GM12878 (cell line): ENCODE measurements at regions of chr6 and their contacts with region 1.

Region 1: GRCh38 chr6:156564127-156564806 is 212.9 kb upstream of the ARID1B start:
- DNase-seq: peak; percentile 46
- ATAC-seq: peak; percentile 100
- H3K4me3 ChIP-seq: no peak overlapping the region
- H3K27ac ChIP-seq: no peak overlapping the region
- H3K4me1 ChIP-seq: no peaks in the 10 kb centered on the region
- H3K27me3 ChIP-seq: no peaks in the 10 kb centered on the region; a peak in 1 of 4 replicates
- CTCF ChIP-seq: peak; percentile 91 to 94 (median 93)
- EP300 ChIP-seq: no peak
- POLR2A ChIP-seq: no peak
- RAD21 ChIP-seq: peak; percentile 97

Region 2: GRCh38 chr6:155319902-155320301 is 1244.4 kb before region 1 on chr6:
- CTCF ChIA-PET with region 1: no interaction called
- POLR2A ChIA-PET with region 1: no interaction called
- RAD21 ChIA-PET with region 1: no interaction called
- SMC1A ChIA-PET with region 1: no interaction called
- in situ Hi-C with region 1: loop called (anchors 10 kb)
- intact Hi-C with region 1: loop called (anchors 5 kb)
- DNase-seq: no peak
- ATAC-seq: no peak
- H3K4me3 ChIP-seq: no peak overlapping the region
- H3K27ac ChIP-seq: no peak overlapping the region
- H3K4me1 ChIP-seq: no peaks in the 10 kb centered on the region; the same call in 1 of the 2 replicates
- H3K27me3 ChIP-seq: no peaks in the 10 kb centered on the region
- CTCF ChIP-seq: no peak
- EP300 ChIP-seq: no peak
- POLR2A ChIP-seq: no peak
- RAD21 ChIP-seq: no peak

Region 3: GRCh38 chr6:156686995-156687788 is 122.9 kb after region 1 on chr6:
- CTCF ChIA-PET with region 1: interaction called, 13 read pairs
- POLR2A ChIA-PET with region 1: no interaction called
- RAD21 ChIA-PET with region 1: interaction called, 4 read pairs
- SMC1A ChIA-PET with region 1: interaction called, 22 read pairs
- in situ Hi-C with region 1: loop called (anchors 5 kb)
- intact Hi-C with region 1: loop called (anchors 1 kb)
- DNase-seq: no peak
- ATAC-seq: peak; percentile 69
- H3K4me3 ChIP-seq: peak overlapping the region; percentile 93
- H3K27ac ChIP-seq: peak overlapping the region; percentile 98
- H3K4me1 ChIP-seq: peaks cover 48% of the 10 kb centered on the region
- H3K27me3 ChIP-seq: no peaks in the 10 kb centered on the region
- CTCF ChIP-seq: no peak
- EP300 ChIP-seq: peak in 1 of 2 experiments; percentile 27; a peak in 1 of 4 replicates
- POLR2A ChIP-seq: peak; percentile 85
- RAD21 ChIP-seq: no peak; the same call in 1 of the 2 replicates

Region 4: DNA sequence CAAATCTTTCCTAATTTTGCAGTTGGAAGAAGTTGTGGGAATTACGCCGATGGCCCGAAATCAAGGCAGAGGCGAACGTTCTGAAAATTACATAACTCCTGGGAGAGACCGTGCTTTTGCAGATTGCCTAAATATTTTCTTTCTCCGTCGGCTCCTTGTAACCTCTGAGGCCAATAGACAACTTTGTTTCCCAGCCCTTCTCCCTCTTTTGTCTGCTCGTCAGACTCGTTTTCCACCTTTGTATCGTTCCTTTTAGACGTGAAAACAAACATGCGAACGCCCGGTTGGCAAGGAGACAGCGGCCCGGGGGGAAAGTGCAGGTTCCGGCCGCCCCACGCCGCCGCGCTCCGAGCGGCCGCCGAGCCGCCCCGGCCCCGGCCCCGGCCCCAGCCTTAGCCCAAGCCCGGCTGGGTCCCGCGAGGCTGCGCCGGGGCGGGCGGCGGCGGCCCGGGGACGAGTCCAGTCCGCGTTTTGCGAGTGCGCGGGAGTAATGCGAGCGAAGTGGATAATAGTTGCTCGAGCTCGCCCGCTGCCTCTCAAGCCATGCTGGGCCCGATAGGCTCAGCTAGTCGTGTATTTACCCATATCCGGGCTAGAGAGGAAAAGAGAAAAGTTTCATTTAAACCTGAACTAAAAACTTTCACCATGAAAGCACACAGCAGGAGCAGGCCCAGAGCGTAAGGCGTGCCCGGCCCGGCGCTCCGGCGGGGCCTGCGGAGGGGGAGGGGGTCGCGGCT is 212.7 kb after region 1 on chr6 and contains the start of gene ARID1B:
- CTCF ChIA-PET with region 1: interaction called, 3 read pairs
- POLR2A ChIA-PET with region 1: no interaction called
- RAD21 ChIA-PET with region 1: no interaction called
- SMC1A ChIA-PET with region 1: interaction called, 3 read pairs
- in situ Hi-C with region 1: no loop called
- intact Hi-C with region 1: loop called (anchors 5 kb)
- DNase-seq: no peak
- ATAC-seq: peak; percentile 59
- H3K4me3 ChIP-seq: peak within 1 kb of the TSS; percentile 92
- H3K27ac ChIP-seq: peak within 1 kb of the TSS; percentile 94
- H3K4me1 ChIP-seq: peaks cover 17% of the 10 kb centered on the region
- H3K27me3 ChIP-seq: no peaks in the 10 kb centered on the region
- CTCF ChIP-seq: no peak
- EP300 ChIP-seq: no peak
- POLR2A ChIP-seq: peak; percentile 76
- RAD21 ChIP-seq: no peak
- polyA plus RNA-seq, gene ARID1B: 37.7 to 73.9 TPM

Region 5: GRCh38 chr6:157029980-157030690 is 465.9 kb after region 1 on chr6:
- CTCF ChIA-PET with region 1: no interaction called
- POLR2A ChIA-PET with region 1: no interaction called
- RAD21 ChIA-PET with region 1: no interaction called
- SMC1A ChIA-PET with region 1: no interaction called
- in situ Hi-C with region 1: no loop called
- intact Hi-C with region 1: no loop called
- DNase-seq: no peak
- ATAC-seq: peak; percentile 61
- H3K4me3 ChIP-seq: no peak overlapping the region
- H3K27ac ChIP-seq: no peak overlapping the region
- H3K4me1 ChIP-seq: peaks cover 7% of the 10 kb centered on the region
- H3K27me3 ChIP-seq: no peaks in the 10 kb centered on the region
- CTCF ChIP-seq: no peak
- EP300 ChIP-seq: no peak
- POLR2A ChIP-seq: no peak
- RAD21 ChIP-seq: no peak

Region 6: DNA sequence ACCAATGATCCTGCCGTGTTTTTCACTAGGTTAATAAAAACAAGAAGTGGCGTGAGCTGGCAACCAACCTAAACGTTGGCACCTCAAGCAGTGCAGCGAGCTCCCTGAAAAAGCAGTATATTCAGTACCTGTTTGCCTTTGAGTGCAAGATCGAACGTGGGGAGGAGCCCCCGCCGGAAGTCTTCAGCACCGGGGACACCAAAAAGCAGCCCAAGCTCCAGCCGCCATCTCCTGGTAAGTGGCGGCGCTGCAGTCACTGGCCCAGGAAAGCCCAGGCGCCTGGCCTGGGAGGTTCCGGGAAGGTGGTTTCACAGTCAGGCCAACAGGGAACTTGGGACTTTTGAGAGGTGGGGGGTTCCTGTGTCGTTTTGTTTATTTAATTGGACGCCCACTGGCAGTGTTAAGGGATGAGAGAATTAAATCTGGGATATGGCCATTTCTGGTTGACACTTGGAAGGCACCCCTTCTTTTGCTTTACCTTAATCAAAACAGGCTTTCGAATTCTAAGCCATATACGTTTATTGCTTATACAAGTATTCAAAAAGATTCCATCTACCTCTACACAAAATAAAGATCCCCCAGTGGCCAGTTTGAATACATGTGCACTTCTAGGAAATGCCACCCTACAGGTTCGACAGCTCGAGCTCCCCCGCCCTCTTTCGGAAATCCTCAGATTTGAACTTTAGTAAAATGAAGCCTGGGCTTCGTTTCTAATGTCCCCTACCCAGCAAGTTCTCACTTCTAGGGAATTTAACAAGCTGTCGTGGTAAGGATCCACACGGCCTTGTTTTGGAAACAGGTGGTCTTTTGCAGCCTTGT is 620.1 kb after region 1 on chr6:
- CTCF ChIA-PET with region 1: no interaction called
- POLR2A ChIA-PET with region 1: no interaction called
- RAD21 ChIA-PET with region 1: no interaction called
- SMC1A ChIA-PET with region 1: no interaction called
- in situ Hi-C with region 1: no loop called
- intact Hi-C with region 1: loop called (anchors 5 kb)
- DNase-seq: no peak
- ATAC-seq: peak; percentile 68
- H3K4me3 ChIP-seq: no peak overlapping the region
- H3K27ac ChIP-seq: no peak overlapping the region
- H3K4me1 ChIP-seq: no peaks in the 10 kb centered on the region
- H3K27me3 ChIP-seq: no peaks in the 10 kb centered on the region
- CTCF ChIP-seq: peak; percentile 56 to 61 (median 57); a peak in 5 of 6 replicates
- EP300 ChIP-seq: no peak
- POLR2A ChIP-seq: no peak
- RAD21 ChIP-seq: peak; percentile 60